CD8-positive, alpha-beta memory T cell (primary cell): ENCODE measurements at regions of chr3 and their contacts with region 1.

Region 1: DNA sequence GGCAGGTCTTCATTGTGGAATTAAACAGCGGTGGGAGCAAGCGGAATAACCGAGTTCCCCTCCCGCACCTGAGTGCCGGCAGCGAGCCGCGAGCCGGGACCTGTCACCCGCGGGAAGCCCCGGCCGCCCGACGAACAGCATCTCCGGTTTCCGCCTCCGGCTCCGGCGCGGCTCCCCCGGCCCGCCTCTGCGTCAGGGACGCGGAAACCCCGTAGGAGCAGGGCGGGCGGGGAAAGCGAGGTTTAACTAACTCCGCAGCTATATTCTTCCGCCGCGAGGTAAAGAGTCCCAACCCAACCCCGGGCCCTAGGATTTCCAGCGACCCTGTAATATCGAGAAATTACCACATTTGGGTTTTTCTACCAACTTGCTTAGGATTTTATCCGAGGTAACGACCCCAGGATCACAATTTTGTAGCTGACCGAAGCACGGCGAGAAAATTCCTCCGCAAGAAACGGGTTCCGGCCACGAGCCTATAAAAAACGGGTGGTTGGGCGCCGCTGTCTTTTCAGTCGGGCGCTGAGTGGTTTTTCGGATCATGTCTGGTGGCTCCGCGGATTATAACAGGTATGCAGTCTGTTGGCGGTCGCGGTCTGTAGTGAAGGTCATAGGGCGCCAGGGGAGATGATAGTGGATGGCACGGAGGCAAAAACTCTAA is at the start of gene EIF4A2:
- DNase-seq: peak; percentile 85 to 94 (median 92)
- H3K4me3 ChIP-seq: peak within 1 kb of the TSS; percentile 99
- H3K4me3 Mint-ChIP-seq: peak within 1 kb of the TSS; percentile 96 to 99 (median 99)
- H3K27ac ChIP-seq: peak within 1 kb of the TSS; percentile 98
- H3K27ac Mint-ChIP-seq: peak within 1 kb of the TSS; percentile 97 to 100 (median 99)
- H3K4me1 ChIP-seq: peaks cover 44% of the 10 kb centered on the region
- H3K4me1 Mint-ChIP-seq: peaks cover 51 to 58% (median 54%) of the 10 kb centered on the region in 3 donors
- H3K27me3 ChIP-seq: no peaks in the 10 kb centered on the region
- H3K27me3 Mint-ChIP-seq: peaks cover 0 to 13% of the 10 kb centered on the region in 2 donors
- total RNA-seq, gene EIF4A2: 563 to 564 TPM

Region 2: GRCh38 chr3:185937689-185938463 is 845.3 kb before region 1 on chr3 and contains the start of gene TRA2B:
- CTCF ChIA-PET with region 1: no interaction called
- POLR2A ChIA-PET with region 1: interaction called, 20 read pairs
- DNase-seq: peak; percentile 97 to 99 (median 98)
- H3K4me3 ChIP-seq: peak within 1 kb of the TSS; percentile 99
- H3K4me3 Mint-ChIP-seq: peak within 1 kb of the TSS; percentile 96 to 100 (median 100)
- H3K27ac ChIP-seq: peak within 1 kb of the TSS; percentile 100
- H3K27ac Mint-ChIP-seq: peak within 1 kb of the TSS; percentile 98 to 100 (median 100)
- H3K4me1 ChIP-seq: peaks cover 23% of the 10 kb centered on the region
- H3K4me1 Mint-ChIP-seq: peaks cover 41 to 58% (median 45%) of the 10 kb centered on the region in 3 donors
- H3K27me3 ChIP-seq: no peaks in the 10 kb centered on the region
- H3K27me3 Mint-ChIP-seq: peaks cover 0 to 11% of the 10 kb centered on the region in 2 donors
- total RNA-seq, gene TRA2B: 305 to 324 TPM

Region 3: GRCh38 chr3:186570096-186570940 is 212.9 kb before region 1 on chr3 and contains the start of gene DNAJB11:
- CTCF ChIA-PET with region 1: no interaction called
- POLR2A ChIA-PET with region 1: interaction called, 35 read pairs
- DNase-seq: peak; percentile 98 to 99 (median 99)
- H3K4me3 ChIP-seq: peak within 1 kb of the TSS; percentile 77
- H3K4me3 Mint-ChIP-seq: peak within 1 kb of the TSS; percentile 86 to 99 (median 89)
- H3K27ac ChIP-seq: peak within 1 kb of the TSS; percentile 98
- H3K27ac Mint-ChIP-seq: peak within 1 kb of the TSS; percentile 93 to 100 (median 98)
- H3K4me1 ChIP-seq: peaks cover 38% of the 10 kb centered on the region
- H3K4me1 Mint-ChIP-seq: peaks cover 56 to 75% (median 72%) of the 10 kb centered on the region in 3 donors
- H3K27me3 ChIP-seq: no peaks in the 10 kb centered on the region
- H3K27me3 Mint-ChIP-seq: no peaks in the 10 kb centered on the region
- total RNA-seq, gene DNAJB11: 62.7 to 65.6 TPM

Region 4: DNA sequence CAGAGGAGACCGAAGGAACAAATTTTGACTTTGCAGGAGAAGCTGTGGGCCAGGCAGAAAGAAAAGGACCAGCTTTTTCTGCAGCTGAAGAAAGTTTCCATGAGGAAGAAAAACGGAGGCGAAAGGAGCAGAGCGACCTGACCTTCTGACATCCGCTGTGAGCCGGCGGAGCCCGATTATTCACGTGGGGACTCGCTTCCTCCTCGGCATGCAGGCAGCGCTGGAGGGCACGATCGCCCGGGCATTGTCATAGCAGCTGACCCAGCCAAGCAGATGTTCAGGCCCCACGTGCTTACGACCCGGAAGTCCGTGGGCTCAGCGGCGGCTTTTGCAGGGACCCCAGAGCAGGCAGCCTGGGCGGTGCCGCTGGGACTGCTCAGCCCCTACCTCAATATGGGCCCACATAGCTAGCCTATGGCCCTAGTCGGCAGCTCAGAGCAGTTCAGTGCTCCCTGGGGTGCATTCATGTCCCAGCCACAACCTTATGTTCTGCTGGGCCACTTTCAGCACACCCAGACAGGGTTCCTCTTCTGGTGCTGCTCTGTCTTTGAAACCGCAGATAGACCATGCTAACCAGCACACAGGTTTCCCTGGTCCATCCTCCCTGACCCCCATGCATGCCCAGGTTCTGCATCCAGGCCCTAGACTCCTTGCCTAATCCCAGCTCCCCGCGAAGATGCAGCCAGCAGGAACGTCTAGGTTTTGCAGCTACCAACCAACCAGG is 10.3 kb before region 1 on chr3:
- CTCF ChIA-PET with region 1: interaction called, 14 read pairs
- POLR2A ChIA-PET with region 1: interaction called, 106 read pairs
- DNase-seq: peak; percentile 46 to 75 (median 50)
- H3K4me3 ChIP-seq: peak overlapping the region; percentile 47
- H3K4me3 Mint-ChIP-seq: peak overlapping the region; percentile 76 to 95 (median 92)
- H3K27ac ChIP-seq: peak overlapping the region; percentile 58
- H3K27ac Mint-ChIP-seq: peak overlapping the region; percentile 42 to 97 (median 94)
- H3K4me1 ChIP-seq: peaks cover 13% of the 10 kb centered on the region
- H3K4me1 Mint-ChIP-seq: peaks cover 15 to 20% (median 18%) of the 10 kb centered on the region in 3 donors
- H3K27me3 ChIP-seq: no peaks in the 10 kb centered on the region
- H3K27me3 Mint-ChIP-seq: no peaks in the 10 kb centered on the region

Region 5: GRCh38 chr3:186798239-186798874 is 15.2 kb after region 1 on chr3:
- CTCF ChIA-PET with region 1: no interaction called
- POLR2A ChIA-PET with region 1: interaction called, 12 read pairs
- DNase-seq: no peak
- H3K4me3 ChIP-seq: no peak overlapping the region
- H3K4me3 Mint-ChIP-seq: no peak overlapping the region
- H3K27ac ChIP-seq: no peak overlapping the region
- H3K27ac Mint-ChIP-seq: peak overlapping the region in 4 of 8 donors; percentile 2 to 43 (median 22)
- H3K4me1 ChIP-seq: no peaks in the 10 kb centered on the region
- H3K4me1 Mint-ChIP-seq: peaks cover 16 to 27% (median 20%) of the 10 kb centered on the region in 3 donors
- H3K27me3 ChIP-seq: no peaks in the 10 kb centered on the region
- H3K27me3 Mint-ChIP-seq: no peaks in the 10 kb centered on the region

Region 6: GRCh38 chr3:186806089-186807055 is 23.2 kb after region 1 on chr3 and contains the start of gene RFC4:
- CTCF ChIA-PET with region 1: interaction called, 4 read pairs
- POLR2A ChIA-PET with region 1: interaction called, 48 read pairs
- DNase-seq: peak; percentile 77 to 87 (median 80)
- H3K4me3 ChIP-seq: peak within 1 kb of the TSS; percentile 97
- H3K4me3 Mint-ChIP-seq: peak within 1 kb of the TSS; percentile 93 to 98 (median 96)
- H3K27ac ChIP-seq: peak within 1 kb of the TSS; percentile 84
- H3K27ac Mint-ChIP-seq: peak within 1 kb of the TSS; percentile 93 to 97 (median 96)
- H3K4me1 ChIP-seq: peaks cover 25% of the 10 kb centered on the region
- H3K4me1 Mint-ChIP-seq: peaks cover 13 to 34% (median 32%) of the 10 kb centered on the region in 3 donors
- H3K27me3 ChIP-seq: no peaks in the 10 kb centered on the region
- H3K27me3 Mint-ChIP-seq: no peaks in the 10 kb centered on the region
- total RNA-seq, gene RFC4: 106 to 110 TPM

Region 7: DNA sequence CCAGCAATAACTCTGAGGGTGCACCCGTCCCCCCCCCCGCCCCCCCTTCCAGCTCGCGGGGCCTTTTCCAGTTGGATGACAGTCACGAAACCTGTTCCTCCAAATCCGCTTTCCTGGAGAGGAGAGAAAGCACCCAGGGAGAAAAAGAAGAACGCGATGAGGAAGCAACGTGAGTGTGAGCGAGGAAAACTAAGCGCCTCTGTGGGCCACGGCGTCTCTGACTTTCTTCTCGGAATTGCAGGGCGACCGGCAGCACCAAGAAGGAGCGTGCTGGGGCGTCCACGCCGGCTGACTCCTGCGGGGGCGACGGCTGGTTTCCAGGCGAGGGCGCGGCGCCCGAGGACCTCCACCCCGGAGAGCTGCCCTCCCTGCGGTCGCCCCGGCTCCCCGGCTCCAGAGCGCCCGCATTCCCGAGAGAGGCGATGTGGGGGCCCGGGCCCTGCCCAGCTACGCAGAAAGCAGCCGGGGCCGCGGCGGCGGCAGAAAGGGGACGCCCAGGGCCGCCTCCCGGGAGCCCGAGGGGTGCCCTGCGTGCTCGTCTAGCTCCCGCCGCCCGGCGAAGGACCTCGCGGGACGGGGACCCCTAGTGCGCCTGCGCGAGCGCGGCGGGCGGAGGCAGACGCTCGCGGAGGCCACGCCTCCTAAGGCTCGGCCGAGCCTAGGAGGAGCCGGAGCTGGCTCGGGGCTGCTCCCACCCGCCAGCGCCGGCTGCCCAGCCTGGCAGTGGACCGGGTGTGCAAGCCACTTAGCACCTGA is 44.0 kb after region 1 on chr3:
- CTCF ChIA-PET with region 1: interaction called, 7 read pairs
- POLR2A ChIA-PET with region 1: interaction called, 13 read pairs
- DNase-seq: peak; percentile 82 to 92 (median 85)
- H3K4me3 ChIP-seq: peak overlapping the region; percentile 68
- H3K4me3 Mint-ChIP-seq: peak overlapping the region; percentile 62 to 89 (median 71)
- H3K27ac ChIP-seq: no peak overlapping the region
- H3K27ac Mint-ChIP-seq: peak overlapping the region in 1 of 8 donors; percentile 73
- H3K4me1 ChIP-seq: peaks cover 23% of the 10 kb centered on the region
- H3K4me1 Mint-ChIP-seq: peaks cover 8 to 25% (median 11%) of the 10 kb centered on the region in 3 donors
- H3K27me3 ChIP-seq: peaks cover 28% of the 10 kb centered on the region
- H3K27me3 Mint-ChIP-seq: peaks cover 28 to 49% of the 10 kb centered on the region in 2 donors